Psoas muscle (tissue), 8 donors: ENCODE measurements at regions of chr6 and their contacts with region 1.

Region 1: GRCh38 chr6:17700421-17701416 is 6.0 kb downstream of the NUP153 start:
- DNase-seq: no peak
- ATAC-seq: no peak
- H3K4me3 ChIP-seq: no peak overlapping the region
- H3K27ac ChIP-seq: peak overlapping the region; percentile 19
- H3K4me1 ChIP-seq: peaks cover 44% of the 10 kb centered on the region
- H3K27me3 ChIP-seq: no peaks in the 10 kb centered on the region
- CTCF ChIP-seq: no peak

Region 2: GRCh38 chr6:17656092-17656491 is 44.6 kb before region 1 on chr6:
- intact Hi-C with region 1: loop called in 1 of 2 experiments (anchors 5 kb)
- DNase-seq: no peak
- ATAC-seq: peak in 1 of 4 donors; percentile 45
- H3K4me3 ChIP-seq: no peak overlapping the region
- H3K27ac ChIP-seq: no peak overlapping the region
- H3K4me1 ChIP-seq: no peaks in the 10 kb centered on the region
- H3K27me3 ChIP-seq: no peaks in the 10 kb centered on the region
- CTCF ChIP-seq: no peak